ENCODE measurements at regions of chr1 and their contacts with region 1.

Region 1: DNA sequence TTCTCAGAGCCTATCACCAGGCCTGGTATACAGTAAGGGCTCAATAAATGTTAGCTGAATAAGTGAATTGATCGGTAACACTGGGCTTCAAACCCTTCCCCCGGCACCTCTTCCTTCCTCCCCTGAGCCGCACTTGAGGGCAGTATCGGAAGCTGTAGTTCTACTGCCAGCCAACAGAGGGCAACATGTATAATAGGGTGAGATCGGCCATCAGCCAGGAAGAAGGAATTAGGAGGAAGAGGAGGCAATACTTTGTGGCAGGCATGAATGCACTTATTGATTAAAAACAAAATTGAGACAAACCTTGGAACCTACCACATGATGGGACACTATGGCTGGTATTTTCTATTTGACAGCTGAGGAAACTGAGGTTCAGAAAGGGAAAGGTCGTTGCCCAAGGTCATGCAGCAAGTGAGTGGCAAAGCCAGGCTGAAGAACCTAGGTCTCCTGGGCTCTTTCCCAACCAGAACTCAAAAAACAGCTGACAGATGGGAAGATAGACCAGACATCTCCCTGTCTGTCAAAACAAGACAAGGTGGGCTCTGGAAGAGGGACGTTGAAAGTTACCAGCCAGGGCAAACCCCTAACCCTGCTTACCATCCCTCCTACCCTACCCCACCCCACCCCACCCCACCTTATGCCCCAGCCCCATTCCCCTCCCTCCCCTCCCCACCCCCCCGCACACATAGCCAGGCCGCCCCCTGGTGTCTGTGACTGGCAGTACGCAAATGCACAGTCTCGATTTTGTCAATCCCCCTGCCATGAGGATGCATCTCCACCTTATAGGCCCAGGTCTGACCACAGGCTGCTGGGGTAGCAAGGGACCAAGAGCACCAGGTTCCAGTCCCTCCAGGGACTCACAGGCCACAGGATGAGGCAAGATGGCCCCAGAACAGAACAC is 107.3 kb upstream of the RUNX3 start:
- DNase-seq: no peak
- H3K4me3 ChIP-seq: no peak overlapping the region
- CTCF ChIP-seq: peak; percentile 64

Region 2: GRCh38 chr1:24897767-24898483 is 139.5 kb before region 1 on chr1:
- CTCF ChIA-PET with region 1: interaction called, 17 read pairs
- POLR2A ChIA-PET with region 1: no interaction called
- DNase-seq: no peak
- H3K4me3 ChIP-seq: no peak overlapping the region
- CTCF ChIP-seq: peak; percentile 95

Region 3: GRCh38 chr1:24935615-24936484 is 101.6 kb before region 1 on chr1:
- CTCF ChIA-PET with region 1: interaction called, 164 read pairs
- POLR2A ChIA-PET with region 1: no interaction called
- DNase-seq: no peak
- H3K4me3 ChIP-seq: no peak overlapping the region
- CTCF ChIP-seq: no peak

Region 4: DNA sequence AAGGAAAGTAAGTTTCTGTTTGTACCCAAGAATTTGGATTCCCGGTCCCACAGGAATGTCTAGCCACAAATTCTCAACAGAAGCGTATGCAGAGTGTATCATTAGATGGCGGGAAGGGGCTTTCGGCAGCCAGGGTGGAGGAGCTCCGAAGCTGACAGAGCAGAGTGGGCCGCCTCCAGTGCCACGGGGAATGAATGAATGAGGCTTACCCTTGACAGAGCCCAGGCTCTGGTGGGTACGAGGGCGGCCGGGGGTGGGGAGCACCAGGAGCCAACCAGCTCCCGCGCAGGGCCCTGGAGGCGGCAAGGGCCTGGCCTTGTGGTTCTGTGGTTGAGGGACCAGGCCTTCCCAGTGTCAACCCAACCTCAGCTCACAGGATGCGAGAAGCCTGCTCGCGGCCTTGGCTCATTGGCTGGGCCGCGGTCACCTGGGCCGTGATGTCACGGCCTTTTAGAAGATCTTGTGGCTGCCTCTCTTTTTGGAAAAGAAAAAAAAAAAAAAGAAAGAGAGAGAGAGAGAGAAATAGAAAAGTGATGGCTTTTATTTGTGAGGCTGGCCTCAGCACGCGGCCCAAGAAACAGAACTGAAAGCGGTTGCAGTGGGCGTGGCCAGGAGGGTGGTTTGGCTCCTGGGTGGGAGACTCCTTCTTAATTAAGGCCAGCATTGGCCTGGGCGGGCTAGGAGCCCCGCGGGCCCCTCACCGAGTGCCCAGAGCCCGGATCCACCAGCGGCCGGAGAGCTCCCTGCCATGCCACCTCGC is 72.4 kb before region 1 on chr1:
- CTCF ChIA-PET with region 1: interaction called, 16 read pairs
- POLR2A ChIA-PET with region 1: no interaction called
- DNase-seq: peak; percentile 50
- H3K4me3 ChIP-seq: peak overlapping the region; percentile 20
- CTCF ChIP-seq: no peak

Region 5: DNA sequence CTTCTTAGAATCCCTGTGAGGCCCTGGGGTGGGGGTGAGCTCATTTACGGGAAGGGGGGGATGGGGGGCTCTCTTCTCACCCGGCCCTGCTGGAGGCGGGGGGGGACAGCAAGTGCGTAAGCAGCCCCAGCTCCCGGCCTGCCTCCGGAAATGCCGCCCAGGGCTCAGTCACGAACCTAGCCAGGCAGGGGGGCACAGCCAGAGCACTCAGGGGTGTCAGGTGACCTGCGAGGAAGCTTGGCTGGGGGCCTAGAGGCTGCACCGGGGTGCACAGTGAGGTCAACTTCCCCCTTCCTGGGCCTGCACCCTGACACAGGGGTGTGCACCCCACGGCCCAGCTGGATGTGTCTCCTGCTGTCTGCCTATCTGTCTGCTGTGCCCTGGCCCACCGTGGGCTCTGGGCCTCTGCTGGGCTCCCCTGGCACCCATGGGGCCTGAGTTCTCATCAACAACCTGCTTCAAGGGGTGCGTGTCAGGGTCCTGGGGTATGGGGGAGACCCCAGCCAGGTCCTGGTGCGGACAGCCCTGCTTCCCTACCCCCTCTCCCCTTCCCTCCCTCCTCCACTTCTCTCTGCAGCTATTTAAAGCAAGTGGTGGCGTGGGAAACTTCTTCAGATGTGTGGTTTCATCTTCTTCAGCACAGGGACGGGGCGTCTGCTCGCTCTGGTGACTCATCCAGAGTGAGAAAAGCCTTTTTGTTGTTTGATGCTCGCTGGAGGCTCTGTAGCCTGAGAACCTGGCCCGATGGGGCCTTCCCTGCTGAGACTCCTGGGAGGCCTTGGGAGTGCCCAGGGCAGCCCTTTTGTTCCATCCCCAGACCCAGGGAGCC is 14.8 kb before region 1 on chr1:
- CTCF ChIA-PET with region 1: interaction called, 83 read pairs
- POLR2A ChIA-PET with region 1: no interaction called
- DNase-seq: peak; percentile 94
- H3K4me3 ChIP-seq: peak overlapping the region; percentile 39
- CTCF ChIP-seq: no peak

Region 6: DNA sequence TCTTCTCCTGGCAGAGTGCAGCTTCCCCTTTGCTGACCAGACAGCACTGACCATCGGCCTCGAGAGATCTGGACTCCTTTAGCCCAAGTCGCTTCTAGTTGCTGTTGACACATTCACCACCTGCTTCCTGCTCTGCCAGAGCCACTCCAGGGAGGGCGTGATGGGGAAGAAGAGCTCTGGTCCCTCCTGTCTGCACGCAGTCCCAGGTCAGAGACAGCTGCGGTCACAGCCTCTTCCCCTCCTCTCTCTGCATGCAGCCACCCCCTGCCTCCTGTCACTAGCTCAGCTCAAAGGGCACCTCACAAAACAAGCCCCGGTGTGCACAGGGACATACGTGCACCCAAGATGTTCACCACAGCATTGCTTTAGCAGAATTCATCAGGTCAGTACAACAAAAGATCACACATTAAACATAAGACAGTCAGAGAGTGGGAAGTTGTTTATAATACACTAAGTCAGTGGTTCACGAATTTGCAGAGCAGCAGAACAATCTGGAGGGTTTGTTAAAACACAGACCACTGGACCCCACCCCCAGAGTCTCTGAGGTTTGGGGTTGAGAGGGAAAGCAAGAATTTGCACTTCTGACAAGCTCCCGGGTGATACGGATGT is 62.0 kb after region 1 on chr1:
- CTCF ChIA-PET with region 1: interaction called, 15 read pairs
- POLR2A ChIA-PET with region 1: no interaction called
- DNase-seq: no peak
- H3K4me3 ChIP-seq: no peak overlapping the region
- CTCF ChIP-seq: no peak

Measured in AG04449 (cell line).